BJ (cell line): ENCODE measurements at regions of chr19 and their contacts with region 1.

Region 1: DNA sequence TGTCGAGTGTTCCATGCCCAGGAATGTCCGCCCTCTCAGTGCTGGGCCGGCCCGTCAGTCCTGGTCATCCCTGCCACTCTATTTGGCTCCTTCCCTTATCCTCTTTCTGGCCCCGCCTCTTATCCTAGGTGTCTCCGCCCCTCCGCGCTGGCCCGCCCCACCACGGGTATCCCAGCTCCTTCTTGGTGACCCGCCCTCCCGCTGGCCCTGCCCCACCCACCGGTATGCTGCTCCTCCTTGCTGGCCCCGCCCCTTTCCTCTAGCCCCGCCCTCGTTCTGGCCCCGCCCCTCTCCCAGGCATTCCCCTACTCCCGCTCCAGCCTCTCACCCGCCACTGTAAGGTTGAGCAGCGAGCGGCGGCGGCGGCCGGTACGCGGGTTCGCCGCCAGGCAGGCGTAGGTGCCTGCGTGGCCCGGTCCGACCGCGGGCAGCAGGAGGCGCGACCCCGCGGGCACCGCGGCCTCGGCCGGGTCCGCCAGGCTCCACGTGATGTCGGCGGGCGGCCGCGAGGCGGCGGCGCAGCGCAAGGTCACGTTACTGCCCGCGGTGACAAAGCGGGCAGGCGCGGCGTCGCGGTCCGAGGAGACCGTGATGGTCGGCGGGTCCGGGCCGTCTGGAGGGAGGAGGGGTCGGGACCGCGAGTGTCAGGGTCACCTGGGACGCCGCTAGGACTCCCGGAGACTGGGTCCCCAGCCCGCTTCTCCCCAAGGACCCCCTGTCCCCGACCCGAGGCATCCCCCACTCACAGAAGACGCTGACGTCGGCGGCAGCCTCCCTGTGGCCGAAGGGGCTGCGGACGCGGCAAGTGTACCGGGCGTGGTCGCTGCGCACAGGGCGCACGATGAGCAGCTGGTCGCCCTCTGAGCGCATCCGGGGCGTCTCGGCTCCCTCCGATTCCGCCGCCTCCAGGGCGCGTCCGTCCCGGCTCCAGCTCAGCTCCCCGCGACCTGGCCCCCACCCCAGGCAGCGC is 2.0 kb downstream of the VSIG10L start:
- DNase-seq: peak; percentile 78
- H3K4me3 ChIP-seq: peak overlapping the region; percentile 65
- H3K27me3 ChIP-seq: no peaks in the 10 kb centered on the region
- CTCF ChIP-seq: no peak

Region 2: GRCh38 chr19:50476224-50476942 is 863.6 kb before region 1 on chr19 and contains the starts of genes EMC10 and GARIN5A:
- CTCF ChIA-PET with region 1: no interaction called
- POLR2A ChIA-PET with region 1: no interaction called
- DNase-seq: peak; percentile 39
- H3K4me3 ChIP-seq: peak within 1 kb of the TSS; percentile 67
- H3K27me3 ChIP-seq: no peaks in the 10 kb centered on the region
- CTCF ChIP-seq: no peak
- polyA plus RNA-seq, gene EMC10: 71.8 and 89.1 TPM in 2 replicates
- polyA plus RNA-seq, gene GARIN5A: 0.26 and 0.56 TPM in 2 replicates

Region 3: GRCh38 chr19:51320280-51320657 is 19.7 kb before region 1 on chr19:
- CTCF ChIA-PET with region 1: no interaction called
- POLR2A ChIA-PET with region 1: no interaction called
- DNase-seq: no peak
- H3K4me3 ChIP-seq: no peak overlapping the region
- H3K27me3 ChIP-seq: no peaks in the 10 kb centered on the region
- CTCF ChIP-seq: no peak

Region 4: DNA sequence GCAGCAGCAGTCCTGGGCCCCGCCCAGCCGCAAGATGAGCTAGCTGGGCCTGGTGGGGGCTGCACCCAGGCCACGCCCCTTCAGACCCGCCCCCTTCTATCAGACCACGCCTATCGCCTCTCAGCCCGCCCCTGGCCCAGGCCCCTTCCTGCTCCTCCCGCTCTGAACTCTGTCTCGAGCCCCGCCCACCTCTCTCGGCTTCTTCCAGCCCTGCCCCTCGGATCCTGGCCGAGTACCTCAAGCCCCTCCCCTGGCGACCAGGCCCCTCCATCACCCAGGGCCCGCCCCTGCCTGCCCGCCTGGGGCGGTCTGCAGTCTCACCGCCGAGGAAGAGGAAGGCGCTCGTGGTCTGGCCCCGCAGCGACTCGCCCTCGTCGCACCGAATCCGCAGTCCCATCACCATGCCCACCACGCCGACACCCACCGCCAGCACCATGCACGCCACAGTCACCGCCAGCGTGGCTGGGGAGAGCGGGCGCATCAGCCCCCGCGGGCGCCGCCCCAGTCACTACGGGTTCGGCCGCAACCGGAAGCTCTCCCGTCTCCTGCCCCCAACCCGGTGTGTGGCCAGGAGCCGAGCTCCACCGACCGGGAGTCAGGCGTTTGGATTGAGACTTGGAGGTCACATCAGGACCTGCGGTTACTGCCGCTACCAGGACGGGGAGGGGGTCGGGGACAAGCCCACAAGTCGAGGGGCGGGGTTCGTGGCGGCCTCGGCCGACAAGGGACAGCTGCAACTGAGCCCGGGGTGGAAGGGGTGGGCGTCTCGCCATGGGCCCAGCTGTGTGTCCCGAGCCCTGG is 27.8 kb after region 1 on chr19:
- CTCF ChIA-PET with region 1: interaction called, 5 read pairs
- POLR2A ChIA-PET with region 1: interaction called, 12 read pairs
- DNase-seq: peak; percentile 92
- H3K4me3 ChIP-seq: peak overlapping the region; percentile 93
- H3K27me3 ChIP-seq: peaks cover under 1% of the 10 kb centered on the region; the same call in 1 of the 2 replicates
- CTCF ChIP-seq: no peak